ENCODE measurements at regions of chr4 and their contacts with region 1.

Region 1: GRCh38 chr4:39638354-39639240 is at the start of gene SMIM14:
- H3K4me3 Mint-ChIP-seq: peak within 1 kb of the TSS; percentile 90
- H3K27ac Mint-ChIP-seq: peak within 1 kb of the TSS; percentile 95
- H3K4me1 Mint-ChIP-seq: peaks cover 35% of the 10 kb centered on the region
- H3K27me3 Mint-ChIP-seq: no peaks in the 10 kb centered on the region

Region 2: DNA sequence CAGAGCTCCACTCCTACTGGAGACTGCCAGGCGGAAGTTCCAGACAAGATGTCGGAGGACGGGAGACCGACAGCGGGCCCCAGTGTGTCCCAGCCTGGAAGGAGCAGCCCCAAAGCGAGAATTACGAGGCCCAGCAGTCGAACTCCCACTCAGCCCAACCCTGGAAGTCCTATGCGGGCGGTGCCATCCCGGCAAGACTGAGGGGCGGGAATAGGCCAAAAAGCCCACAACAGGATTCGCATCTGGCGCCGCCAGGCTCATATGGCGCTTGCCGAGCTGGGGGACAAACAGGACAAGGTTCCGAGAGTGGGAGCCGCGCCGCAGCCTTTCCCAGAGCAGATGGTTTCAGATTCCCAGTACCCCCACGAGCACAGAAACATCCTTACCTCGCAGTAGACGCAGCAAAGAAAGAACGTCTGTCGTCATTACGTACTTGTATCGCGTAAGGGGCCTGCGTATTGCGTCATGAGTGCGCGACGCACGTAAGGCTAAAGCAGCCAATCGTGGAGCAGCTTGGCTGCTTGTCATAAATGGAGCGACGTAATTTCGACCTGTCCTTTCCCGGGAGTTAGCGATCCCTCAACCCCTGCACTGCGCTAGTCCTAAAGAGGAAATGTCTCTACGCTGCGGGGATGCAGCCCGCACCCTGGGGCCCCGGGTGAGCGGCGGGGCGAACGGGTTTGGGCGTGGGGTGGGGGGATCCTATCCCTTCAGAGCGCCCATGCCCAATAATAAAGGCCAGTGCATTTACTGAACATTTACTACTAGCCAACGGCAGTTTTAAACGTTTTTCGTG is 179.9 kb before region 1 on chr4 and contains the starts of genes LIAS and RPL9:
- intact Hi-C with region 1: loop called (anchors 5 kb)
- H3K4me3 Mint-ChIP-seq: peak within 1 kb of the TSS; percentile 94
- H3K27ac Mint-ChIP-seq: peak within 1 kb of the TSS; percentile 99
- H3K4me1 Mint-ChIP-seq: peaks cover 15% of the 10 kb centered on the region
- H3K27me3 Mint-ChIP-seq: no peaks in the 10 kb centered on the region

Region 3: DNA sequence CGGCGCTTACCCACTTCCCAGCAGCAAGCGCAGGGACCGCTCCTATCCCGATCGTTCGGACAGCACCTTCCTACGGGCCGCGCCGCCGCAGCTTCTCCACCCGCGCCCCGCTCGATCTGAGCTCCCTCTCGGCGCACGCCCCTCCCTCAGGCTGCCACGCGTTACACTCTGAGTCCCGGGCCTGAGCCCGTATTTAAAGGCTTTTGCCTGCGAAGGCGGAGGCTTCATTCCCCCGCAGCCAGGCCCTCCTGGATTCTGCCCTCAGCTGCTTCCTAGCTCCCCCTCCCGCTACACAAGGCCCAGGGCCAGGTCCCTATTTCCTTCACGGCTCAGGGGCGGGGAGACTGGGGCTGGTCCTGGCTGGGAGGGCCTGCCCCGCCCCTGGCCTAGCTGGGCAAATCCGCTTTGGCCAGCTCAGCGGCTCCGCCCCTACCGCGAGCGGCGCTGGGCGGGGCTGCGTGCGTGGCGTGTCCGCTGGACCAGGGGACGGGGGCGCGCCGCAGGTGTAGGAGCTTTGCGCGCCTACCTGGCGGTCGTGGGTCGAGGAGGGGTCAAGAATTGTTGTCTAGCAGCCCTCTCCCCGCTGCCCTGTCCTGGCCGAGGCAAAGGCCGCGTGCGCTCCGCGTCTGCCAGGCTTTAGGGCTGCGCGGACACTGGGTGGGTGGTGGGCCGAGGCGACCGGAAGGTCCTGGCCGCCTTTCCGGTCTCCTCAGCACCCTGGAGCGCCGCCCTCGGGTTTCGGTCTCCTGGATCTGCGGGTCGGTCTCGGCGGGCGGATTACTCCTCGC is 111.1 kb before region 1 on chr4 and contains the start of gene UGDH:
- intact Hi-C with region 1: loop called (anchors 2 kb)
- H3K4me3 Mint-ChIP-seq: peak within 1 kb of the TSS; percentile 99
- H3K27ac Mint-ChIP-seq: peak within 1 kb of the TSS; percentile 93
- H3K4me1 Mint-ChIP-seq: peaks cover 19% of the 10 kb centered on the region
- H3K27me3 Mint-ChIP-seq: no peaks in the 10 kb centered on the region

Region 4: DNA sequence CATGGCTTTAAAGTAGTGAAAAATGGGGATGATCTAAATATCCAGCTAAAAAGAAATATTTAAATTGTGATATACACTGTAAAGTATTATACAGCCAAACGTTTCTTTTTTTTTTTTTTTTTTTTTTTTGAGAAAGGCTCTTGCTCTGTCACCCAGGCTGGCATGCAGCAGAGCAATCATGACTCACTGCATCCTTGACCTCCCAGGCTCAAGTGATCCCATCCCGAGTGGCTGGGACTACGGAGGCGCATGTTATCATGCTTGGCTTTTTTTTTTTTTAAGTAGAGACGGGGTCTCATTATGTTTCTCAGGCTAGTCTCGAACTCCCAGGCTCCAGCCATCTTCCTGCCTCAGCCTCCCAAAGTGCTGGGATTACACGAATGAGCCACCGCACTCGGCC is 17.0 kb before region 1 on chr4:
- intact Hi-C with region 1: loop called (anchors 2 kb)
- H3K4me3 Mint-ChIP-seq: no peak overlapping the region
- H3K27ac Mint-ChIP-seq: no peak overlapping the region
- H3K4me1 Mint-ChIP-seq: peaks cover 25% of the 10 kb centered on the region
- H3K27me3 Mint-ChIP-seq: no peaks in the 10 kb centered on the region

Region 5: GRCh38 chr4:39697740-39698423 is 59.3 kb after region 1 on chr4 and contains the start of gene UBE2K:
- intact Hi-C with region 1: loop called (anchors 5 kb)
- H3K4me3 Mint-ChIP-seq: peak within 1 kb of the TSS; percentile 93
- H3K27ac Mint-ChIP-seq: peak within 1 kb of the TSS; percentile 91
- H3K4me1 Mint-ChIP-seq: peaks cover 16% of the 10 kb centered on the region
- H3K27me3 Mint-ChIP-seq: no peaks in the 10 kb centered on the region

Measured in dendritic cell treated with granulocyte-macrophage colony-stimulating factor and Interleukin-4, amounts not matched to agents 40 ng/mL and 50 ng/mL, for 4 days (primary cell).